GM12878 (cell line): ENCODE measurements at regions of chr7 and their contacts with region 1.

Region 1: DNA sequence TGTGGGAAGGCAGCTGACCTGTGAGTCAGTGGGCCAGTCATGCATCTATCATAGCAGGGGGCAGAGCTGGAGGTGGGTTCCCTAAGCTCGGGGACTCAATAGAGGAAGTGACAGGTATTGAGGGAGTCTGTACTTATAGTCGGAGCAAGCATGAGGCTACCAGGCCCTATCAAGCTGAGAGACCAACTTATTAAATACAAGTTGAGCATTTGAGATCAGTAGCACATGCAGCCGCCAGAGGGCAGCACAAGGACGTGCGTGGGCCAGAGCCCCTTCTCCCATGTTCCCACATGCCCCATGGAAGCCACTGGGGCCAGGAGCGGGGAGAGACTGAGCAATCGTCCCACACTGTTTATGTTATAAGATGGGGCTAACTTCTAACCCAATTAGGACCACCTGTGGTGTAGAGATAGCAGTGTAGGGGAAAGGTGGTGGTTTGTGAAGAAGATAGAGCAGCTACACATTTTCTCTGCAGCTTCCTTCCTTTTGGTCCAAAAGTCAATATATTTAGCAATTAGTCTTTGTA is 13.0 kb upstream of the STK31 start:
- DNase-seq: no peak
- ATAC-seq: peak; percentile 97
- H3K4me3 ChIP-seq: no peak overlapping the region
- H3K27ac ChIP-seq: no peak overlapping the region
- H3K4me1 ChIP-seq: no peaks in the 10 kb centered on the region
- H3K27me3 ChIP-seq: no peaks in the 10 kb centered on the region
- CTCF ChIP-seq: peak; percentile 72 to 89 (median 73)
- EP300 ChIP-seq: no peak
- POLR2A ChIP-seq: no peak
- RAD21 ChIP-seq: peak; percentile 44

Region 2: GRCh38 chr7:23597094-23598091 is 99.6 kb before region 1 on chr7 and contains the start of gene CCDC126:
- CTCF ChIA-PET with region 1: interaction called, 20 read pairs
- POLR2A ChIA-PET with region 1: interaction called, 8 read pairs
- RAD21 ChIA-PET with region 1: interaction called, 20 read pairs
- SMC1A ChIA-PET with region 1: interaction called, 29 read pairs
- in situ Hi-C with region 1: no loop called
- intact Hi-C with region 1: no loop called
- DNase-seq: peak; percentile 57
- ATAC-seq: peak; percentile 77
- H3K4me3 ChIP-seq: peak within 1 kb of the TSS; percentile 76
- H3K27ac ChIP-seq: peak within 1 kb of the TSS; percentile 92
- H3K4me1 ChIP-seq: peaks cover 32% of the 10 kb centered on the region
- H3K27me3 ChIP-seq: no peaks in the 10 kb centered on the region
- CTCF ChIP-seq: no peak
- EP300 ChIP-seq: no peak
- POLR2A ChIP-seq: peak; percentile 74
- RAD21 ChIP-seq: no peak
- polyA plus RNA-seq, gene CCDC126: 34.3 to 49.9 TPM

Region 3: GRCh38 chr7:23672033-23672432 is 24.9 kb before region 1 on chr7:
- CTCF ChIA-PET with region 1: interaction called, 16 read pairs
- POLR2A ChIA-PET with region 1: no interaction called
- RAD21 ChIA-PET with region 1: interaction called, 3 read pairs
- SMC1A ChIA-PET with region 1: interaction called, 3 read pairs
- in situ Hi-C with region 1: no loop called
- intact Hi-C with region 1: no loop called
- DNase-seq: no peak
- ATAC-seq: no peak
- H3K4me3 ChIP-seq: no peak overlapping the region
- H3K27ac ChIP-seq: no peak overlapping the region
- H3K4me1 ChIP-seq: no peaks in the 10 kb centered on the region
- H3K27me3 ChIP-seq: no peaks in the 10 kb centered on the region
- CTCF ChIP-seq: no peak
- EP300 ChIP-seq: no peak
- POLR2A ChIP-seq: no peak
- RAD21 ChIP-seq: no peak

Region 4: DNA sequence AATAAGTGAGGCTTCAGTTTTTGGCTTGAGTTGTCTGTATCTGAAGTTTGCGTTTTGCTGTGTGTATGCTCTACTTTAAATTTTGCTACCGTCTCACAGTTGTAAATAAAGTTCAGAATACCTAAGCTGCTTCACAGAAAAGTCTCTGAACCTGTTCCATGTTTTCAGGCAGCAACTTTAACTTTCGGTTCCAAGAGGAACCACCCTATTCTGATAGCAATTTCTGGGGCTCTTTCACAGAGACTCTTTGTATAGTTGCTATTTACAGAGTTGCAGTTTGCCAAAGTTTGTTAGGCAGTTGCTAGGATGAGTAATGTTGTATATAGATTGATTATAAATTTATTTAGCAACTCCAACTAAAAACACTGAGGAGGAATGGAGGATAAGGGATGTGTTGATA is 11.2 kb before region 1 on chr7:
- CTCF ChIA-PET with region 1: interaction called, 123 read pairs
- POLR2A ChIA-PET with region 1: no interaction called
- RAD21 ChIA-PET with region 1: interaction called, 7 read pairs
- SMC1A ChIA-PET with region 1: interaction called, 16 read pairs
- in situ Hi-C with region 1: no loop called
- intact Hi-C with region 1: no loop called
- DNase-seq: no peak
- ATAC-seq: peak; percentile 54
- H3K4me3 ChIP-seq: no peak overlapping the region
- H3K27ac ChIP-seq: no peak overlapping the region
- H3K4me1 ChIP-seq: no peaks in the 10 kb centered on the region; the same call in 1 of the 2 replicates
- H3K27me3 ChIP-seq: no peaks in the 10 kb centered on the region
- CTCF ChIP-seq: no peak
- EP300 ChIP-seq: no peak
- POLR2A ChIP-seq: no peak
- RAD21 ChIP-seq: no peak

Region 5: DNA sequence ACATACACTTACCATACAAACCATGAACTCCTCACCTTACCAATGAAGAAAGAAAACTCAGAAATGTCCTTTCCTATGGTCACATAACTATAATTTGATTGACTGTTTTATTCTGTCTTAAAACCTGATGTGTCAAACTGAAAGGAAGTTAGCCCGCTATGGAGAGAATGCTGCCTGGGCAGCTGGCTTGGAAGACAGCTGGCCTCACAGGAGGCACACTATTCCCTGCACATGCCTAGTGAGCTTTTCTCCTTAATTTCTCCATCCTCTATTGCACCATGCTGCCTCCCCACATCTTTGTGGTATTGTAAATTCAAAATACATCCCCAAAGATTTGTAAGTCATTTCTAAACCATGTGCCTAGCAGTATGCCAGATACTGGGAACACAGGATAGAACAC is 176.3 kb after region 1 on chr7:
- CTCF ChIA-PET with region 1: no interaction called
- POLR2A ChIA-PET with region 1: no interaction called
- RAD21 ChIA-PET with region 1: no interaction called
- SMC1A ChIA-PET with region 1: no interaction called
- in situ Hi-C with region 1: no loop called
- intact Hi-C with region 1: no loop called
- DNase-seq: no peak
- ATAC-seq: no peak
- H3K4me3 ChIP-seq: no peak overlapping the region
- H3K27ac ChIP-seq: no peak overlapping the region
- H3K4me1 ChIP-seq: no peaks in the 10 kb centered on the region
- H3K27me3 ChIP-seq: no peaks in the 10 kb centered on the region
- CTCF ChIP-seq: no peak
- EP300 ChIP-seq: no peak
- POLR2A ChIP-seq: no peak
- RAD21 ChIP-seq: no peak